ENCODE measurements at regions of chr18 and their contacts with region 1.

Region 1: GRCh38 chr18:73614812-73615211 is 532.8 kb downstream of the FBXO15 start:
- DNase-seq: peak; percentile 97
- H3K4me3 ChIP-seq: no peak overlapping the region
- H3K27ac ChIP-seq: peak overlapping the region; percentile 91
- H3K4me1 ChIP-seq: peaks cover 42% of the 10 kb centered on the region
- H3K27me3 ChIP-seq: no peaks in the 10 kb centered on the region
- CTCF ChIP-seq: no peak

Region 2: DNA sequence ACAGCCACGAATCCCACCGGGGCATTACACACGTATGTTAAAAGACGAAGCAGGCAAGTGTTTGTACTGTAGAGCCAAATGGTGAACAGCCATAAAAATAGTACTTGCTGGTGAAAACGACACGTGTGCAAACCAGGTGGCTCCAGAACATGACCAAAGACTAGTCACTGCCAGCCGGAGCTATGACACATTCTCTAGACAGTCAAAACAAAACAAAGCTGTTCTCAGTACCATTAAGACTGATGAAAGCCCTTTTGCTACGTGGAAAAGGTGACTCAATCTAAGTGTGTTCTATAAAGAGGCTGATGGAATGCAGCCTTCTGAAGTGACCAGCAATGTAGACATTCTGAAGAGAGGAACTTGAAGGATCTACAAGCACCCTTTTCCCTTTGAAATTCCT is 379.3 kb before region 1 on chr18:
- CTCF ChIA-PET with region 1: no interaction called
- dilution Hi-C with region 1: no loop called
- in situ Hi-C with region 1: no loop called
- intact Hi-C with region 1: loop called (anchors 10 kb)
- DNase-seq: peak; percentile 96
- H3K4me3 ChIP-seq: no peak overlapping the region
- H3K27ac ChIP-seq: peak overlapping the region; percentile 82
- H3K4me1 ChIP-seq: peaks cover 14% of the 10 kb centered on the region
- H3K27me3 ChIP-seq: no peaks in the 10 kb centered on the region
- CTCF ChIP-seq: no peak

Region 3: DNA sequence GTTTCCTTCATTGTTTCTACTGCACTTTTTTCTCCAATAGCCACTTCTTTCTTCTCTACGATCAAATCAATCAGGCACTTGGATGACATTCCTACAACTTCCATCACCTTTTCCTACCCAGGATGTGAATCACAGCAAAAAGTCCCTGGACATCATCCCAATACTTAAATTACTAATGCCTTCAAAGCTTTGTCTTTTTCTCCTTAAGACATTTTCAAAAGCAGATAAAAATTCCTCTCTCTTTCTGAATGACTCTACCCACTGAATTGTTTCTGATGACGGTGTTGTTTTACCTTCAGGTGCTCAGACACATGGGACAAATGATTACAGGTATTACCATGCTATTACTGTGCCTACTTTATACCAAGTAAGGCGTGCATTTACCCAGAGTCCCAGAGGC is 32.0 kb after region 1 on chr18:
- CTCF ChIA-PET with region 1: no interaction called
- dilution Hi-C with region 1: no loop called
- in situ Hi-C with region 1: no loop called
- intact Hi-C with region 1: loop called (anchors 2 kb)
- DNase-seq: peak; percentile 90
- H3K4me3 ChIP-seq: no peak overlapping the region
- H3K27ac ChIP-seq: peak overlapping the region; percentile 93
- H3K4me1 ChIP-seq: peaks cover 29% of the 10 kb centered on the region
- H3K27me3 ChIP-seq: no peaks in the 10 kb centered on the region
- CTCF ChIP-seq: no peak

Region 4: GRCh38 chr18:73670536-73670935 is 55.7 kb after region 1 on chr18:
- CTCF ChIA-PET with region 1: no interaction called
- dilution Hi-C with region 1: no loop called
- in situ Hi-C with region 1: no loop called
- intact Hi-C with region 1: loop called (anchors 1 kb)
- DNase-seq: peak; percentile 95
- H3K4me3 ChIP-seq: no peak overlapping the region
- H3K27ac ChIP-seq: peak overlapping the region; percentile 77
- H3K4me1 ChIP-seq: peaks cover 21% of the 10 kb centered on the region
- H3K27me3 ChIP-seq: no peaks in the 10 kb centered on the region
- CTCF ChIP-seq: no peak

Region 5: DNA sequence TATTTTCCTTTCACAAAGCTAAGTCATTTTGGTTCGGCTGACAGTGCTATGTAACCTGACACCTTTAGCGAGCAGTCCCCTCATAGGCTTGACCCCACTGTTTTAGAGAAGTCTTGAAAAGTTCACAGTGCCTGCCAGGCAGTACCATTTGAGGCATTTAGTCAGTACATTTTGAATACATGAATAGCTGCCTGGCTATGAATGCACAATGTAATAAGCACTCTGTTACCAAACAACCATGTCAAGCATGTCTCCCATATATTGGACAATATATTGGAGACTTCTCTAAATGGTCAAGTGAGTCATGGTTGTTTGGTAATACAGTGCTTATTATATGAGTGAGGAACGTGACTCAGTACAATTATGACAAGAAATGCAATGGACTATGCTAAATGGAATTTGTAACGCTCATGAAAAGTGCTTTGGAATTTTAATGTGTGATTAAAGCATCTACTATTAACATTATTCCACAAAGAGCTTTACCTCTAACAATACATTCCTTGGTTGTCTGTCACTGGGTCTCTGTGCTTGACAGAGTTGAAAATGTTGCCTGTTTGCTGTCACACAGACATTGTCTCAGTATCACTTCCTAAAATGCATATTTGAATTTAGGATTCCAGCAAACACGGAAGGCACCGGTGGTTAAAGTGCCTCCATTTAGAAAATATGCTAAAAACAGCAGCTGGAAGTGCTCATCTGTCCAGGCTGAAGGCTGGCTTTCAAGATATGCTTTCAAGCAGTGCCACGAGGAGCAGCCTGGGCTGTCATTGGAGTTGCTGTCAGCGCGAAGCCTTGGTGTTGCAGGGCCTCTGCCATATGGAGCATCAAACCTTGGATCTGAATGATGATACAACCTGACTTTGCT is 74.3 kb after region 1 on chr18:
- CTCF ChIA-PET with region 1: no interaction called
- dilution Hi-C with region 1: no loop called
- in situ Hi-C with region 1: no loop called
- intact Hi-C with region 1: loop called (anchors 2 kb)
- DNase-seq: peak; percentile 85
- H3K4me3 ChIP-seq: no peak overlapping the region
- H3K27ac ChIP-seq: peak overlapping the region; percentile 18
- H3K4me1 ChIP-seq: peaks cover 23% of the 10 kb centered on the region
- H3K27me3 ChIP-seq: no peaks in the 10 kb centered on the region
- CTCF ChIP-seq: no peak

Measured in mammary epithelial cell (primary cell).